Activated CD4-positive, alpha-beta memory T cell treated with anti-CD3 and anti-CD28 coated beads for 36 hours (primary cell): ENCODE measurements at regions of chr6 and their contacts with region 1.

Region 1: GRCh38 chr6:319177-320131 is 27.2 kb downstream of the DUSP22 start:
- DNase-seq: peak; percentile 55
- H3K4me3 Mint-ChIP-seq: no peak overlapping the region
- H3K27ac Mint-ChIP-seq: peak overlapping the region; percentile 60
- H3K4me1 Mint-ChIP-seq: peaks cover 20% of the 10 kb centered on the region
- H3K27me3 Mint-ChIP-seq: peaks cover 2% of the 10 kb centered on the region

Region 2: DNA sequence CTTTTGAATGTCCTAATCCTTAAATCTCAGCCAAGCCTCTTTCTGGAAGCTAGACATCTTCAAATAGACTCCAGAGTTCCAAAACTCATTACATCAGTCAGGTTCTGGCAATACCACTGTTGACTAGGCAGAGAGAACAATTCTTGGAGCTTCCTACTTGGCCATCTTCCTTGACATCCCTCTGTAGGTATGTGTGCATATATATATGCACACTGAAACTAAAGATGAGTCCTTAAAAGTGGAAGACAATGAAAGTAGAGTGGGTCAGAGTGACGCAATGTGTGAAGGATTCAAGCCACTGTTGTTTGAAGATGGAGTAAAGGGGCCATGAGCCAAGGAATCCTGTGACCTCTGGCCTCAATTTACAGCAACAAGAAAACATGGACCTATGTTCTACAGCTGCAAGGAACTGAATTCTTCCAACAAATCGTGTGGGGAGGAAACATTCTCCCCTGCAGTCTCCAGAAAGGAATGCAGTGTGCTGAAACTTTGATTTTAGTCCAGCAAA is 45.8 kb before region 1 on chr6:
- CTCF ChIA-PET with region 1: no interaction called
- POLR2A ChIA-PET with region 1: no interaction called
- intact Hi-C with region 1: loop called (anchors 5 kb)
- DNase-seq: no peak
- H3K4me3 Mint-ChIP-seq: no peak overlapping the region
- H3K27ac Mint-ChIP-seq: no peak overlapping the region
- H3K4me1 Mint-ChIP-seq: peaks cover 24% of the 10 kb centered on the region
- H3K27me3 Mint-ChIP-seq: no peaks in the 10 kb centered on the region

Region 3: GRCh38 chr6:336159-337019 is 16.9 kb after region 1 on chr6:
- CTCF ChIA-PET with region 1: no interaction called
- POLR2A ChIA-PET with region 1: interaction called, 3 read pairs
- intact Hi-C with region 1: loop called (anchors 1 kb)
- DNase-seq: no peak
- H3K4me3 Mint-ChIP-seq: no peak overlapping the region
- H3K27ac Mint-ChIP-seq: no peak overlapping the region
- H3K4me1 Mint-ChIP-seq: peaks cover 35% of the 10 kb centered on the region
- H3K27me3 Mint-ChIP-seq: no peaks in the 10 kb centered on the region

Region 4: GRCh38 chr6:524803-525202 is 205.3 kb after region 1 on chr6:
- CTCF ChIA-PET with region 1: no interaction called
- POLR2A ChIA-PET with region 1: no interaction called
- intact Hi-C with region 1: no loop called
- DNase-seq: peak; percentile 66
- H3K4me3 Mint-ChIP-seq: no peak overlapping the region
- H3K27ac Mint-ChIP-seq: peak overlapping the region; percentile 62
- H3K4me1 Mint-ChIP-seq: peaks cover 33% of the 10 kb centered on the region
- H3K27me3 Mint-ChIP-seq: no peaks in the 10 kb centered on the region

Region 5: DNA sequence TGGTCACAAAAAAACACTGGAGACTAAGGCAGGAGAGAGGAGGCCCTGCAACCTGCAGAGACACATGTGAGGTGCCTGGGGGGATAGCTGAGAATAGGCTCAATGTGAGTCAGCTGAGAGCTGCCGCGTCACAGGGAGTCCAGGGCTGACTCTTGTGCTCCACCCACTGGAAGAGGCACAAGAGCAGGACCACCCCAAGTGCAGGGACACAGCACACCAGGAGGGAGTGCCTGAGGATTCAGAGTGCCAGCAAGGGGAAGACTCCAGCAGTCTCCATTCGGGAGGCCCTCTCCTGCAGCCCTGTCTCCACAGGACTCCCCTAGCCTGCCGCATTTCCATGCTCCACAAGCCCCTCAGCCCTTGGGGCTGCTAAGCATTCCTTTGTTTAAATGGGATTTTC is 232.0 kb after region 1 on chr6:
- CTCF ChIA-PET with region 1: no interaction called
- POLR2A ChIA-PET with region 1: no interaction called
- intact Hi-C with region 1: loop called (anchors 10 kb)
- DNase-seq: peak; percentile 68
- H3K4me3 Mint-ChIP-seq: no peak overlapping the region
- H3K27ac Mint-ChIP-seq: peak overlapping the region; percentile 97
- H3K4me1 Mint-ChIP-seq: peaks cover 69% of the 10 kb centered on the region
- H3K27me3 Mint-ChIP-seq: no peaks in the 10 kb centered on the region